AG04449 (cell line): ENCODE measurements at regions of chr18 and their contacts with region 1.

Region 1: DNA sequence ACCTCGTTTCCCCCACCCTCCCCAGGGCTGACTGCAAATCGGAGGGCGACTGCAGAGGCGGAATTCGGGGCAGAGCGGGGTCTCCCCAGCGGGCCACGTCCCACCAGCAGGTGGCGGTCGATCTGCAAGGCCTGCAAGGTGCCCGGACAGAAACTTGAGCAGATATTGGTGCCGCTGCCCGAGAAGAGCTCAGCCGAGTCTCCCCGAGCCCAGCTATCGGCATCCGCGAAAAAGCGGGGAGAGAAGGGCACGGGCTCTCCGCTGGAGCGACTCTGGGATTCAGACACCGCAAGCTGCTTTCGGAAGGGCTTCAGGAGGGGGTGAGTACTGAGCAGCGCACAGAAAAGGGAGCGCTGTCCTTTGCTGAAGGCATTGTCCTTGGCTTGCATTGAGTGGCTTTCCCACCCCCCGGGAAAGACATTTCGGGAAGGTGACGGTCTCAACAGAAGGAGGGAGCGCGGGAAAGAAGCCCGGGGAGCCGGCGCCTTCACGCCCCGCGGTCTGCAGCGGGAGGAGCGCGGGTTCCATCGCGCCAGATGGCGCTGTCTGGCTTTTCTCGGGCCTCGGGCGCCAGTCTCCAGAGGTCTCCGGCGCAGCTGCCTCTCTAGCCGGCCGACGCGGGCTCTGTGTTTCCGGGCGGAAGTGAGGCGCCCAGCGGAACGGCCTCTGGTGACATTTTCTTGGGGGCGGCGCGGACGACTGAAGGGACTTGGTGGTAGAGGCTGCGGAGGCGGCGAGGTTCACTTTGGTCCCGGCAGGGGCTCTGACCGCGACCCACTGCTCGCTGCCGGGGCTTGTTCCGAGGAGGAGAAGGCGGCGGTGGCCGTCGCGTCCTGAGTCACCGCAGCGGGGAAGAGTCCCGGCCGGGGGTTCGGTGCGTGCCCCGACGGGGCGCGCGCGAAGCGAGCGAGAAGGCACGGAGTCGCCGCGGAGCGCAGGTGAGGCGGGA is 69.5 kb downstream of the HAUS1 start:
- DNase-seq: peak; percentile 63
- H3K4me3 ChIP-seq: peak overlapping the region; percentile 93
- CTCF ChIP-seq: peak; percentile 97

Region 2: GRCh38 chr18:46141199-46141598 is 32.5 kb before region 1 on chr18:
- CTCF ChIA-PET with region 1: interaction called, 55 read pairs
- POLR2A ChIA-PET with region 1: no interaction called
- DNase-seq: no peak
- H3K4me3 ChIP-seq: no peak overlapping the region
- CTCF ChIP-seq: no peak

Region 3: GRCh38 chr18:46199515-46200147 is 26.0 kb after region 1 on chr18:
- CTCF ChIA-PET with region 1: interaction called, 31 read pairs
- POLR2A ChIA-PET with region 1: no interaction called
- DNase-seq: no peak
- H3K4me3 ChIP-seq: no peak overlapping the region
- CTCF ChIP-seq: no peak

Region 4: DNA sequence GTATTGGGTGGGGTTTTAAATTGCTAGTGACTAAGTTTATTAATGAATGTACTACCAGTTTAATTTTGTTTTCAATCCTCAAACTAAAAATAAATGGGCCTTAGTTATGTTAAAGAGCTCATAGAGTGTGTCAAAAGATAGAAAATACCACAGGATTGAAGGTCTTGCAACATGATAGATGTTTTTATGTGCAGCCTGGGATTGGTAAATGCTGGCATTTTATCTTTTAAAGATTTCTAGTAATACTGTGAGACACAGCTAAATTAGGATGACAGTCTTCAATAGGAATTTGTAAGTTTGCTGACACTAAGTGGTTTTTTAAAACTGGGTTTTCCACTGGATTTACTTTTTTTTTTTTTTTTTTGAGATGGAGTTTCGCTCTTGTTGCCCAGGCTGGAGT is 52.8 kb after region 1 on chr18:
- CTCF ChIA-PET with region 1: interaction called, 53 read pairs
- POLR2A ChIA-PET with region 1: no interaction called
- DNase-seq: peak; percentile 47
- H3K4me3 ChIP-seq: no peak overlapping the region
- CTCF ChIP-seq: no peak

Region 5: GRCh38 chr18:46264235-46264893 is 90.7 kb after region 1 on chr18:
- CTCF ChIA-PET with region 1: interaction called, 33 read pairs
- POLR2A ChIA-PET with region 1: no interaction called
- DNase-seq: no peak
- H3K4me3 ChIP-seq: no peak overlapping the region
- CTCF ChIP-seq: no peak

Region 6: DNA sequence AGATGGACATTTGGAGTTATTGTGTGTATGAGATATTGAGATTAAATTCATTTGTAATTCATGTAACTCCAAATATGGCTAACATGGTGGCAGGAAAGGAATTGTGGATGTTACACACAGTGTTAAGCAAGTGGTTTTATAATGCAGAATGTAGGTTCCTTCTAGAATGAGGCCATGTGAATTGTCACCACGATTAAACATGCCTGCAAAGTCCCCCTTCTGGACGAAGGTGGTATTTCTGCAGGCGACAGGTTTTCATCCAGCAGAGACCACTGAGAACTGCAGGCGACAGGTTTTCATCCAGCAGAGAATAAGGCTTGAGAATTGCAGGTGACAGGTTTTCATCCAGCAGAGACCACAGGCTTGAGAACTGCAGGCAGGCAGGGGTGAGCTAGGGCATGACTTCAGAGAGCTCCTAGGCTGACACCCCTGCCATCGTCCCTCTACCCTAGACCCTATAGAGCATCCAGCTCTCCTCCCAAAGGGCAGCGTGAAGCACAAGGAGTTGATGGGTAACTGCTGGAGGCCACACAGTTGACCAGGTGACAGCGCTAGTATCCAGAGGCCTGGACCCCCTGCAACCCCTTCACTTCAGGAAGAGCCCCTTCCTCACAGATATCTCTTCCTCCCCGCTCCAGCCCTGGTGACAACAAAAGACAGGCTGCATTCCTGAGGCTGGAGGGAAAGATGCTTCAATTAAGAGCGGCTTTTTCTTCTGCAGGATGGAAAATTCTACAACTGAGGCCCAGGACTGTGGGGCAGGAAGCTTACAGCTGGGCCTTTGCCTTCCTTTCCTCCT is 307.6 kb after region 1 on chr18:
- CTCF ChIA-PET with region 1: interaction called, 10 read pairs
- POLR2A ChIA-PET with region 1: no interaction called
- DNase-seq: no peak
- H3K4me3 ChIP-seq: no peak overlapping the region
- CTCF ChIP-seq: peak; percentile 56

Region 7: GRCh38 chr18:46660955-46661749 is 487.5 kb after region 1 on chr18:
- CTCF ChIA-PET with region 1: interaction called, 51 read pairs
- POLR2A ChIA-PET with region 1: no interaction called
- DNase-seq: no peak
- H3K4me3 ChIP-seq: no peak overlapping the region
- CTCF ChIP-seq: no peak